ENCODE measurements at regions of chr16 and their contacts with region 1.

Region 1: GRCh38 chr16:58733671-58734458 is at the start of gene GOT2:
- DNase-seq: peak; percentile 87 to 92
- ATAC-seq: peak; percentile 94
- H3K4me3 ChIP-seq: peak within 1 kb of the TSS; percentile 20 to 32
- H3K27ac ChIP-seq: peak within 1 kb of the TSS in 1 of 2 donors; percentile 1
- H3K4me1 ChIP-seq: no peaks in the 10 kb centered on the region
- H3K27me3 ChIP-seq: no peaks in the 10 kb centered on the region
- total RNA-seq, gene GOT2: 31.9 to 32.7 TPM

Region 2: DNA sequence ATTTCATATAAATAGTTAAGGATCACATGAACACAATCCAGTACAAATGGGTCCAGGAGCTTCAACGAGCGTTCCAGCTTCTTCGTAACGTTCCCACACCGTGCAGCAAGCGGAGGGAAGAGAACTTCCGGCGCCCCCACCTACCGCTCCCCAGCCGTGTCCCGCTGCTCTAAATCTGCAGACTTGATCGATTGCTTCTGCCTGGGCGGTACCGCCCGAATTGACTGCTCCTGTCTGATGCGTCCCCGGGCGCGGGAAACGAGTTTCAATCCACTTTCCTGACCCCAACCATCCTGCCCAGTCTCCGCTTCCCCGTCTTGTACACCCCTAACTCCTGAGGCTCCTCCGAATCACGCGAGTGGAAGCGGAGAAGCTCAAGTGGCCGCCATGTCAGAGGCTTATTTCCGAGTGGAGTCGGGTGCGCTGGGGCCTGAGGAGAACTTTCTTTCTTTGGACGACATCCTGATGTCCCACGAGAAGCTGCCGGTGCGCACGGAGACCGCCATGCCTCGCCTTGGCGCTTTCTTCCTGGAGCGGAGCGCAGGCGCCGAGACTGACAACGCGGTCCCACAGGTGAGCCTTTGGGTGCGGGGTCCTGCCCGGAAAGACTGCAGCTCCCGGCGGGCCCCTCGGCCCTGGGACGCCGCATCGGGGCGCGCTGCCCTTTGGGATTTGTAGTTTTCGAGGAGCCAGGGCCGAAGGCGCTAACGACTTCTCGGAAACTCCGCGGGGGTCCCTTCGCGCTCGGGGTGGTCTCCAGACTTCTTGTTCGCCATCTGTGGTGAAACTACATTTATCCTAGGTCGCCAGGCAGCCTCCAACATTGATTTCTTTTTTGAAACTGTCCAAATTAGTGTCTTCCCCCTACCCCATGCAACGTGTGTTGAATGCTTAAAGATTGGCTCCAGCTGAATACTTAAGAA is 341.4 kb before region 1 on chr16 and contains the start of gene GINS3:
- intact Hi-C with region 1: loop called in 1 of 2 experiments (anchors 5 kb)
- DNase-seq: peak; percentile 93 to 94
- ATAC-seq: peak; percentile 97
- H3K4me3 ChIP-seq: peak within 1 kb of the TSS; percentile 29 to 84
- H3K27ac ChIP-seq: peak within 1 kb of the TSS in 1 of 2 donors; percentile 4
- H3K4me1 ChIP-seq: no peaks in the 10 kb centered on the region
- H3K27me3 ChIP-seq: no peaks in the 10 kb centered on the region
- total RNA-seq, gene GINS3: 1.8 to 2.2 TPM

Region 3: GRCh38 chr16:58515125-58515870 is 218.6 kb before region 1 on chr16 and contains the start of gene SETD6:
- intact Hi-C with region 1: loop called (anchors 10 kb)
- DNase-seq: peak; percentile 92 to 96
- ATAC-seq: peak; percentile 96
- H3K4me3 ChIP-seq: peak within 1 kb of the TSS; percentile 45 to 85
- H3K27ac ChIP-seq: peak within 1 kb of the TSS in 1 of 2 donors; percentile 36
- H3K4me1 ChIP-seq: no peaks in the 10 kb centered on the region
- H3K27me3 ChIP-seq: no peaks in the 10 kb centered on the region
- total RNA-seq, gene SETD6: 11.1 to 16.2 TPM

Region 4: GRCh38 chr16:58629572-58630104 is 104.2 kb before region 1 on chr16 and contains the start of gene CNOT1:
- intact Hi-C with region 1: loop called in 1 of 2 experiments (anchors 5 kb)
- DNase-seq: peak; percentile 98
- ATAC-seq: peak; percentile 97
- H3K4me3 ChIP-seq: peak within 1 kb of the TSS; percentile 64 to 91
- H3K27ac ChIP-seq: peak within 1 kb of the TSS; percentile 87 to 96
- H3K4me1 ChIP-seq: no peaks in the 10 kb centered on the region
- H3K27me3 ChIP-seq: no peaks in the 10 kb centered on the region
- total RNA-seq, gene CNOT1: 103 to 124 TPM

Region 5: GRCh38 chr16:58684354-58685083 is 49.3 kb before region 1 on chr16 and contains the start of gene SLC38A7:
- intact Hi-C with region 1: loop called (anchors 5 kb)
- DNase-seq: peak; percentile 93 to 96
- ATAC-seq: peak; percentile 90
- H3K4me3 ChIP-seq: peak within 1 kb of the TSS; percentile 44 to 48
- H3K27ac ChIP-seq: no peak within 1 kb of the TSS
- H3K4me1 ChIP-seq: no peaks in the 10 kb centered on the region
- H3K27me3 ChIP-seq: no peaks in the 10 kb centered on the region
- total RNA-seq, gene SLC38A7: 11.2 to 22.9 TPM

Region 6: DNA sequence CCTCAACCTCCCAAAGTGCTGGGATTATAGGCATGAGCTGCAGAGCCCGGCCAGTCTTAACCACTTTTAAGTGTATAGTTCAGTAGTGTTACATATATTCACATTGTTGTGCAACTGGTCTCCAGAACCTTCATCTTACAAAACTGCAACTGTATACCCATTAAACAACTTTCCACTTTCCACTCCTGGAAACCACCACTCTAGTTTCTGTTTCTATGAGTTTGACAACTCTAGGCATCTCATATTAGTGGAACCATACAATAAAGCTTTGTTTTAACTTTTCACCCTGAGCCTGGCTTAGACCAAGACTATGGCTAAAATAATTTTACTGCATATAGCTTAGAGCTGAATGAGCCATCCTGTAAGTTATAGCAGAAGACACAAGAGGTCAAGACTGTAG is 108.3 kb after region 1 on chr16:
- intact Hi-C with region 1: no loop called
- DNase-seq: no peak
- ATAC-seq: no peak
- H3K4me3 ChIP-seq: no peak overlapping the region
- H3K27ac ChIP-seq: no peak overlapping the region
- H3K4me1 ChIP-seq: no peaks in the 10 kb centered on the region
- H3K27me3 ChIP-seq: no peaks in the 10 kb centered on the region